HEK293 (cell line): ENCODE measurements at regions of chr19 and their contacts with region 1.

Region 1: GRCh38 chr19:12722566-12723380 is 959 bp downstream of the TNPO2 start:
- H3K4me3 ChIP-seq: peak overlapping the region; percentile 79
- H3K27ac ChIP-seq: peak overlapping the region; percentile 97
- H3K4me1 ChIP-seq: no peaks in the 10 kb centered on the region
- CTCF ChIP-seq: no peak

Region 2: GRCh38 chr19:12696366-12697335 is 26.1 kb before region 1 on chr19 and contains the start of gene FBXW9:
- CTCF ChIA-PET with region 1: interaction called, 4 read pairs
- POLR2A ChIA-PET with region 1: interaction called, 19 read pairs
- H3K4me3 ChIP-seq: peak within 1 kb of the TSS; percentile 84
- H3K27ac ChIP-seq: peak within 1 kb of the TSS; percentile 79
- H3K4me1 ChIP-seq: no peaks in the 10 kb centered on the region
- CTCF ChIP-seq: peak; percentile 24; the same call in 1 of the 2 replicates

Region 3: DNA sequence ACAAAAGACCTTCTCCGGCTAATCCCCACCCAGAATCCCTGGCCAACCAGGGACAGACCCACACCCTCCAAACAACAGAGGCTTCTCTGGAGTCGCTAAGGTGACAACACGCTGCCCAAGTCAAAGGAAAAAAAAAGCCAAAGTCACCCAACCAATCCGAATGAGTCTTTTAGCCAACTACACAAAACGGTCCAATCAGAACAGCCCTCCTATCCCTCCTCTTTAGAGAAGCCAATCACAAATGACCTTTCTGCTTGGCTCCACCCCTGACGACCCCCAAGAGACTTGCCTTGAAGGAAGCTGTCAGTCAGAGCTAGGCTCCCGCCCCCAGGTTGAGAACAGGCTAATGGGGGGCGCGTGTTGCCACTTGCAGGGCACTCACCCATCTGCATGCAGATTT is 19.7 kb before region 1 on chr19:
- CTCF ChIA-PET with region 1: no interaction called
- POLR2A ChIA-PET with region 1: interaction called, 16 read pairs
- H3K4me3 ChIP-seq: no peak overlapping the region
- H3K27ac ChIP-seq: no peak overlapping the region
- H3K4me1 ChIP-seq: no peaks in the 10 kb centered on the region
- CTCF ChIP-seq: no peak

Region 4: DNA sequence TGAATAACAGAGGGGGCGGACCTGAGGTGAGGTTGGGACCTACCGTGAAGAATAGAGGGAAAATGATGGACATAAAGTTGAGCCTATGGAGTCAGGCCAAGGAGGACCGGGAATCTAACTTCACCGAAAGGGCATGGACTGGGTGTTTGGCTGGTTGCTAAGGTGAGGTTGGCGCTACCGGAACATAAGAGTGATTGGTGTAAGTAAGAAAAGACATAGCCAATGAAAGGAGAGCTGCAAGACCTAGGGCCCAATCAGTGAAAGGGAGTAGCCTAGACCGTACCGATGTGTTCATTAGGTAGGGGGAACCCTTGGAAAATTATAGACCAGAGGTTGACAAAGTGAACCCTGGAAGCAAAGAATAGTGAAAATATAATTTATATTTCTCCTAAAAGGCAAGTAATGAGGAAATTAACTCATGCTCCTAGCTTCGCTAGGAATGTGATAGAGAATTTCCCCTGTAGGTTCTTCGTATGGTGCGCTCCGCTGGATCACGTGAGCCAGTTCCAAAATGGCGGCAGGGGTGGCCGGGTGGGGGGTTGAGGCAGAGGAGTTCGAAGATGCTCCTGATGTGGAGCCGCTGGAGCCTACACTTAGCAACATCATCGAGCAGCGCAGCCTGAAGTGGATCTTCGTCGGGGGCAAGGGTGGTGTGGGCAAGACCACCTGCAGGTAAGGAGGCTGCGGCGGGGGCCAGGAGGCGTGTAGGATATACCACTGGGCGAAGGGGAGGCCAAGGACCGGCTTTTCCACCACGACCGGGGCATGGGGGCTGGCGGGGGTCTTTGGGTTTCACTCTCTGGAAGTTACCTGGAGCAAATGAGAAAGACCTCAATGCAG is 14.4 kb after region 1 on chr19 and contains the start of gene GET3:
- CTCF ChIA-PET with region 1: interaction called, 19 read pairs
- POLR2A ChIA-PET with region 1: interaction called, 89 read pairs
- H3K4me3 ChIP-seq: peak within 1 kb of the TSS; percentile 96
- H3K27ac ChIP-seq: peak within 1 kb of the TSS; percentile 84
- H3K4me1 ChIP-seq: 0 out of 2 replicates have a peak, but pooled peaks cover 4% of the 10 kb centered on the region
- CTCF ChIP-seq: no peak; the same call in 1 of the 2 replicates